ENCODE measurements at regions of chr16 and their contacts with region 1.

Region 1: DNA sequence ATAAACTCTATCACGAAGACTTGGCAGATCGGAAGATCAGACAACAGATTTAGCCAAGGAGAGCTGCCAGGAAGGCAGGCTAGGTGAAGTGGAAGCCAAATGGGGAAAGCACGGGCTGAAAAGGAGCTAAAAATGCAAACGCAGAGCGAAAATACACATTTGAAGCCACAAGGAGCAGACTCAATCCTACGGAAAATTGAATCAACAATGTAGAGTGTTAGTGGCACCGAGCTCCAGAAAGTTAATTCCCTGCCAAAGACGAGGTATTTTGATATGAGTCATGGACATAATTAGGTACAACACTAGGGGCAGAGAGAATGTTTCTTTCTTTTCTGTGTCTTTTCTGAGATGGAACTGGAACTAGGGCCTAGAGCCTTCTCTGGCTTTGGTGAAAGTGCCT is 20.7 kb downstream of the GSG1L start:
- DNase-seq: no peak
- ATAC-seq: peak in 3 of 4 donors; percentile 38 to 71 (median 70)
- H3K4me3 ChIP-seq: no peak overlapping the region
- H3K27ac ChIP-seq: peak overlapping the region in 2 of 12 donors; percentile 30 to 33
- H3K4me1 ChIP-seq: peaks cover 0 to 3% (median 0%) of the 10 kb centered on the region in 12 donors
- H3K27me3 ChIP-seq: peaks cover 0 to under 1% (median 0%) of the 10 kb centered on the region in 9 donors
- CTCF ChIP-seq: peak in 1 of 12 donors; percentile 7
- POLR2A ChIP-seq: no peak

Region 2: DNA sequence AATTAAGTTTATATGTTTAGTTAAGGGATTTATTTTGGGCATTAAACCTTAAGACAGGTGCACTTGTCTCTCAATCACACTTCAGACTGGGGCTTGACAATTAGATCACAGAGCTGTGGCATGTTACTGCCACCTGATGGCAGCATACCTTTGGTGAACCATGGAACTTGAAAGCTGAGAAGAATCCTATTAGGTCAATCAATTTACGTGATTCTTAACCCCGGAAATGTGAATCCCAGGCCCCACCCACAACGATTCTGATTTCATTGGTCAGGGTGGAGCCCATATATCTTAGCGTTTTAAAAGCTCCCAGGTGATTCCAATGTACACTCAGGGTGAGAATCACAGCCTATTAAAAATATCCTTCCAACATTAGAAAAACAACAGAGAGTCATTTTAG is 70.3 kb before region 1 on chr16:
- intact Hi-C with region 1: loop called in 1 of 10 experiments (anchors 10 kb)
- DNase-seq: peak in 1 of 5 donors; percentile 37
- ATAC-seq: peak in 3 of 4 donors; percentile 51 to 69 (median 61)
- H3K4me3 ChIP-seq: no peak overlapping the region
- H3K27ac ChIP-seq: no peak overlapping the region
- H3K4me1 ChIP-seq: peaks cover 0 to 2% (median 0%) of the 10 kb centered on the region in 12 donors
- H3K27me3 ChIP-seq: no peaks in the 10 kb centered on the region
- CTCF ChIP-seq: peak in 11 of 12 donors; percentile 31 to 61 (median 50)
- POLR2A ChIP-seq: no peak